ENCODE measurements at regions of chr17 and their contacts with region 1.

Region 1: GRCh38 chr17:8965394-8966168 is at the start of gene PIK3R5:
- DNase-seq: peak; percentile 88 to 95 (median 94)
- H3K4me3 ChIP-seq: peak within 1 kb of the TSS; percentile 86 to 98 (median 95)
- H3K4me3 Mint-ChIP-seq: peak within 1 kb of the TSS; percentile 100
- H3K27ac ChIP-seq: peak within 1 kb of the TSS; percentile 91 to 97
- H3K27ac Mint-ChIP-seq: peak within 1 kb of the TSS; percentile 97 to 99 (median 98)
- H3K4me1 ChIP-seq: peaks cover 76 to 89% of the 10 kb centered on the region in 2 donors
- H3K4me1 Mint-ChIP-seq: peaks cover 77% of the 10 kb centered on the region
- H3K27me3 ChIP-seq: no peaks in the 10 kb centered on the region
- H3K27me3 Mint-ChIP-seq: peaks cover 0 to 2% (median 2%) of the 10 kb centered on the region in 3 donors
- CTCF ChIP-seq: peak; percentile 36
- polyA plus RNA-seq, gene PIK3R5: 32.1 to 127 (median 47.5) TPM

Region 2: GRCh38 chr17:8916466-8916865 is 49.1 kb before region 1 on chr17:
- intact Hi-C with region 1: loop called in 1 of 2 experiments (anchors 2 kb)
- DNase-seq: peak; percentile 86 to 94 (median 86)
- H3K4me3 ChIP-seq: peak overlapping the region in 1 of 3 experiments; percentile 26
- H3K4me3 Mint-ChIP-seq: peak overlapping the region; percentile 53 to 70
- H3K27ac ChIP-seq: peak overlapping the region; percentile 86 to 98
- H3K27ac Mint-ChIP-seq: peak overlapping the region; percentile 97 to 100 (median 98)
- H3K4me1 ChIP-seq: peaks cover 23 to 52% of the 10 kb centered on the region in 2 donors
- H3K4me1 Mint-ChIP-seq: peaks cover 45% of the 10 kb centered on the region
- H3K27me3 ChIP-seq: no peaks in the 10 kb centered on the region
- H3K27me3 Mint-ChIP-seq: no peaks in the 10 kb centered on the region
- CTCF ChIP-seq: no peak

Region 3: DNA sequence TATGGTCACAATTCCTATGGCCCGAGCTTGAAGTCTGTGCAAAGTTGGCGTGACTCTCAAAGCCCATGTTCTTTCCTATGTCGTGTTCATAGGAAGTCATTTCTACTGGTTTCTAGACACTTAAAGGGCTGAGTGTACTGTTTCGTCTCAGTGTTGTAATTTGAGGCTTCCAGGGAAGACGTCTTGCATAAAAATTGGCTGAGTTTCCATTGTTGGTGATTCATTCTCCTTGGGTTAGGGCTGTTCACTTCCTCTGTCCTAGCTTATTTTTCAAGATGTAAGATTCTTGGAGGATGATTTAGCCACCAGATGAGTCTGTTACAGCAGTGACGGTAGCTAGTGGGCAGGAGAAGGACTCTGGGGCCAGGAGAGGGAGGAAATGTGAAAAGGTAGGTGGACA is 43.1 kb before region 1 on chr17:
- intact Hi-C with region 1: loop called in 1 of 2 experiments (anchors 2 kb)
- DNase-seq: peak; percentile 97 to 99 (median 99)
- H3K4me3 ChIP-seq: peak overlapping the region in 1 of 3 experiments; percentile 7
- H3K4me3 Mint-ChIP-seq: peak overlapping the region in 1 of 2 donors; percentile 85
- H3K27ac ChIP-seq: peak overlapping the region; percentile 91 to 99
- H3K27ac Mint-ChIP-seq: peak overlapping the region in 4 of 7 donors; percentile 99 to 100 (median 99)
- H3K4me1 ChIP-seq: peaks cover 32 to 59% of the 10 kb centered on the region in 2 donors
- H3K4me1 Mint-ChIP-seq: peaks cover 36% of the 10 kb centered on the region
- H3K27me3 ChIP-seq: no peaks in the 10 kb centered on the region
- H3K27me3 Mint-ChIP-seq: no peaks in the 10 kb centered on the region
- CTCF ChIP-seq: no peak

Region 4: GRCh38 chr17:8954339-8954738 is 11.2 kb before region 1 on chr17:
- intact Hi-C with region 1: loop called in 1 of 2 experiments (anchors 2 kb)
- DNase-seq: peak; percentile 97 to 99 (median 99)
- H3K4me3 ChIP-seq: peak overlapping the region; percentile 13 to 57 (median 17)
- H3K4me3 Mint-ChIP-seq: peak overlapping the region; percentile 73 to 83
- H3K27ac ChIP-seq: peak overlapping the region; percentile 97 to 100
- H3K27ac Mint-ChIP-seq: peak overlapping the region; percentile 97 to 100 (median 100)
- H3K4me1 ChIP-seq: peaks cover 68 to 91% of the 10 kb centered on the region in 2 donors
- H3K4me1 Mint-ChIP-seq: peaks cover 92% of the 10 kb centered on the region
- H3K27me3 ChIP-seq: no peaks in the 10 kb centered on the region
- H3K27me3 Mint-ChIP-seq: peaks cover 0 to 1% (median 0%) of the 10 kb centered on the region in 3 donors
- CTCF ChIP-seq: no peak

Region 5: GRCh38 chr17:9104370-9105041 is 138.9 kb after region 1 on chr17:
- intact Hi-C with region 1: no loop called
- DNase-seq: no peak
- H3K4me3 ChIP-seq: no peak overlapping the region
- H3K4me3 Mint-ChIP-seq: no peak overlapping the region
- H3K27ac ChIP-seq: no peak overlapping the region
- H3K27ac Mint-ChIP-seq: no peak overlapping the region
- H3K4me1 ChIP-seq: no peaks in the 10 kb centered on the region
- H3K4me1 Mint-ChIP-seq: peaks cover 6% of the 10 kb centered on the region
- H3K27me3 ChIP-seq: no peaks in the 10 kb centered on the region
- H3K27me3 Mint-ChIP-seq: peaks cover 2 to 5% (median 4%) of the 10 kb centered on the region in 3 donors
- CTCF ChIP-seq: no peak

Measured in CD14-positive monocyte (primary cell).